Calu3 (cell line): ENCODE measurements at regions of chr3 and their contacts with region 1.

Region 1: DNA sequence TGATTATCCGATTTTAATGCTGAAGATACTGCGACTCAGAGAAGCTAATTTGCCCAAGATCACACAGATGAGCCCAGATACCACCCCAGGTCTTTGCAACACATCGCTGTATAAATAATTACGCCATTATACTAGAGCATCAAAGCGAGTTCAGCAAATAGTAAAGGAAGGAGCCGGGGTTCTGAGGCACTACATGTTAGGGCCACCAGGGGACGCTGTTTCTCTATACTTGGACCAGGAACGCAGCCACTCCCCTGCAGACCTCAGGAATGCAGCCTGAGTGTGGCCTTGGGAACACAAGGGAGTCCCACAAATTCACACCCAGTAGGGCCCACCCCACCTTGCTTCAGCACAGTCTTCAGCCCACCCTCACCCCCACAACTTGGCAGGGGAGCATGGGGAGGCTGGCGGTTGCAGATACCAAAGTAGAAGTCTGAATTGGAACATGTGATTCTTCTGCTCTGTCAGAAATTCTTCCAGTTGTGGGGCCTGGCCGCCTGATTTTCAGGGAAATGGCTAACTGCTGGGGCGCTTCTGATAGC is 57.8 kb upstream of the RYK start:
- DNase-seq: peak; percentile 95
- H3K4me3 Mint-ChIP-seq: peak overlapping the region; percentile 42
- H3K27ac Mint-ChIP-seq: peak overlapping the region; percentile 18
- H3K4me1 Mint-ChIP-seq: peaks cover 44% of the 10 kb centered on the region
- H3K27me3 Mint-ChIP-seq: peaks cover 14% of the 10 kb centered on the region
- CTCF ChIP-seq: peak; percentile 100

Region 2: DNA sequence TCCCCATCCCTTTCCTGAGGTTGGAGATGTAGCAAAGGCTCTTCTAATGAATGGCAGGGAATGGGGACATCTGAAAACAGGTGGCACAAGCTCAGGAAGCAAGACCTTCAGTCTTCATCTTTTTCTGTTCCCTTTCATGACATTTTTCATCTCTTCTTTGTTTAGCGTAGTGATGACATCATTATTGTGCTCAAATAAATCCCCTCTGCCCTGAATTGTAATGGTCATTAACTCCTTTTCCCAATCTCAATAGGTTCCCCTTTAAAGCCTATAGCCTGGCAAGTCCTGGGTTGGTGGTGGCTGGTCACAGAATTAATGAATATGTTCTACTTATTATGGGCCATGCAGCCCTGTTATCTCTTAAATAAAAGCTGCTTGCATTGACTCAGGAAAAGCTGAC is 540.8 kb before region 1 on chr3:
- CTCF ChIA-PET with region 1: no interaction called
- intact Hi-C with region 1: no loop called
- DNase-seq: no peak
- H3K4me3 Mint-ChIP-seq: no peak overlapping the region
- H3K27ac Mint-ChIP-seq: no peak overlapping the region
- H3K4me1 Mint-ChIP-seq: no peaks in the 10 kb centered on the region
- H3K27me3 Mint-ChIP-seq: peaks cover 73% of the 10 kb centered on the region
- CTCF ChIP-seq: no peak

Region 3: GRCh38 chr3:134357261-134358184 is 49.1 kb after region 1 on chr3:
- CTCF ChIA-PET with region 1: interaction called, 7 read pairs
- intact Hi-C with region 1: loop called (anchors 2 kb)
- DNase-seq: peak; percentile 89
- H3K4me3 Mint-ChIP-seq: peak overlapping the region; percentile 20
- H3K27ac Mint-ChIP-seq: peak overlapping the region; percentile 90
- H3K4me1 Mint-ChIP-seq: peaks cover 81% of the 10 kb centered on the region
- H3K27me3 Mint-ChIP-seq: no peaks in the 10 kb centered on the region
- CTCF ChIP-seq: no peak

Region 4: DNA sequence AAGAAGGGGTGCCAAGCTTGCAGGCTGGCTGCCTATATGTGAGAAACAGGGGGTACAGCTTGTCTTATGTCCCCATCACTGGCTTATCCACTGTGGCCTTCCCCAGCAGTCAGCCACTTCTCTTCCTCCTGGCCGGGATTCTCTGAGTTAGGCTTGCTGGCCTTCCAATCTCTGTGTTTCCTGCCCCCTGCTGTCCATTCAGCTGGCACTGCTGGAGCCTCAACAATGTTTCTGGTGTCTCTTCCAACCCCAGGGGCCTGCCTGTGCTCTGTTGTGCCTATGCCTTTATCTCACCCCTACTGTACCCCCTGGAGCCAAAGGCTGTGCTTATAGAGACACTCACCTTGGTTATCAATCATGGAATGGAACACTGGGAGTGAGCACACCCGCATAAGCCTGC is 140.9 kb after region 1 on chr3:
- CTCF ChIA-PET with region 1: interaction called, 4 read pairs
- intact Hi-C with region 1: loop called (anchors 1 kb)
- DNase-seq: peak; percentile 76
- H3K4me3 Mint-ChIP-seq: no peak overlapping the region
- H3K27ac Mint-ChIP-seq: no peak overlapping the region
- H3K4me1 Mint-ChIP-seq: no peaks in the 10 kb centered on the region
- H3K27me3 Mint-ChIP-seq: no peaks in the 10 kb centered on the region
- CTCF ChIP-seq: peak; percentile 63